ENCODE measurements at regions of chr20 and their contacts with region 1.

Region 1: DNA sequence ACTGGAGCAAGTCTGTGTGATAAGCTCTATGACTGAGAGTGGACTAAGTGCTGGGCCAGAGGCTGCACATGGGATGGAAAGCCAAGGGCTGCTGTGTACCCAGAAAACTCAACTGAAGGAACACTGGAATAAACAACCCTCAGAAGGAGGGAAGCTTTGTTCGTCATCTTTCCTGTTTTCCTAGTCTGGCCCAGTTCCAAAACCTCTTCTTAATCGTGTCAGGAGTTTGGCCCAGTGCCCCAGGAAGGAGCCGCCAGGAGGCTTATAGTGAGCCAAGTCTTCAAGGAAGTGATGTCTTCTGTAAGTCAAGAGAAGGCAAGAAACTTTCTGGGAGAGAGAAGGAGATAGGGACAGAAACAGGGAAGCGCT is 23.3 kb upstream of the TOP1 start:
- DNase-seq: peak; percentile 68 to 84
- ATAC-seq: peak; percentile 46 to 52
- H3K4me3 ChIP-seq: no peak overlapping the region
- H3K27ac ChIP-seq: peak overlapping the region; percentile 69 to 78 (median 74)
- H3K4me1 ChIP-seq: peaks cover 28 to 35% of the 10 kb centered on the region in 2 donors
- H3K27me3 ChIP-seq: no peaks in the 10 kb centered on the region
- CTCF ChIP-seq: no peak
- POLR2A ChIP-seq: peak; percentile 16 to 19

Region 2: GRCh38 chr20:41028348-41029148 is 23.2 kb after region 1 on chr20 and contains the start of gene TOP1:
- in situ Hi-C with region 1: no loop called
- intact Hi-C with region 1: loop called (anchors 2 kb)
- DNase-seq: peak; percentile 99 to 100
- ATAC-seq: peak; percentile 94 to 95
- H3K4me3 ChIP-seq: peak within 1 kb of the TSS; percentile 75 to 99 (median 96)
- H3K27ac ChIP-seq: peak within 1 kb of the TSS; percentile 93 to 99 (median 98)
- H3K4me1 ChIP-seq: peaks cover 41 to 45% of the 10 kb centered on the region in 2 donors
- H3K27me3 ChIP-seq: no peaks in the 10 kb centered on the region
- CTCF ChIP-seq: peak in 1 of 5 experiments; percentile 13
- POLR2A ChIP-seq: peak; percentile 98
- total RNA-seq, gene TOP1: 9.4 to 13.6 (median 12.2) TPM

Region 3: DNA sequence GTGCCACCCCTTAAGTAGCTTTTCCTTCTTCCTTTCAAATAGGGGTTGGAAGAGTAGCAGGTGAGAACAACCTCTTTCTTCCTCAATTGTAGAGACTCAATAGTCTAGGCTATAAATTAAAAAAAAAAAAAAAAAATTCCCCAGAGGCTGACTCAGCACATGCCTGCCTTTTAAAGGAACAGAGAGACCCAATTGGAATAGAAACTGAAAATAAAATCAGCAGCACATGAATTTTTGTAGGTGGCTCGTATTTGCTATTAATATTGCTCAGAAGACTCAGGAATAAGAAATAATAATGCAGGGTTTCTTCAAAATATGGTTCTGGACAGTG is 42.6 kb after region 1 on chr20:
- in situ Hi-C with region 1: no loop called
- intact Hi-C with region 1: no loop called
- DNase-seq: no peak
- ATAC-seq: peak; percentile 25 to 51
- H3K4me3 ChIP-seq: peak overlapping the region; percentile 21 to 47 (median 30)
- H3K27ac ChIP-seq: peak overlapping the region in 3 of 4 donors; percentile 49 to 66 (median 57)
- H3K4me1 ChIP-seq: peaks cover 84 to 92% of the 10 kb centered on the region in 2 donors
- H3K27me3 ChIP-seq: no peaks in the 10 kb centered on the region
- CTCF ChIP-seq: no peak
- POLR2A ChIP-seq: no peak